Mammary epithelial cell (primary cell): ENCODE measurements at regions of chr10 and their contacts with region 1.

Region 1: GRCh38 chr10:48656241-48656913 is 28.3 kb upstream of the WDFY4 start:
- DNase-seq: peak; percentile 85
- H3K4me3 ChIP-seq: peak overlapping the region; percentile 30 to 70 (median 59)
- H3K27ac ChIP-seq: no peak overlapping the region
- H3K4me1 ChIP-seq: peaks cover 16% of the 10 kb centered on the region
- H3K27me3 ChIP-seq: no peaks in the 10 kb centered on the region
- CTCF ChIP-seq: peak; percentile 85

Region 2: GRCh38 chr10:48363617-48364355 is 292.6 kb before region 1 on chr10:
- CTCF ChIA-PET with region 1: interaction called, 17 read pairs
- dilution Hi-C with region 1: no loop called
- in situ Hi-C with region 1: loop called in 1 of 2 experiments (anchors 5 kb)
- intact Hi-C with region 1: loop called (anchors 1 kb)
- DNase-seq: peak; percentile 60
- H3K4me3 ChIP-seq: no peak overlapping the region
- H3K27ac ChIP-seq: peak overlapping the region; percentile 36
- H3K4me1 ChIP-seq: peaks cover 21% of the 10 kb centered on the region
- H3K27me3 ChIP-seq: no peaks in the 10 kb centered on the region
- CTCF ChIP-seq: peak; percentile 64 to 77

Region 3: DNA sequence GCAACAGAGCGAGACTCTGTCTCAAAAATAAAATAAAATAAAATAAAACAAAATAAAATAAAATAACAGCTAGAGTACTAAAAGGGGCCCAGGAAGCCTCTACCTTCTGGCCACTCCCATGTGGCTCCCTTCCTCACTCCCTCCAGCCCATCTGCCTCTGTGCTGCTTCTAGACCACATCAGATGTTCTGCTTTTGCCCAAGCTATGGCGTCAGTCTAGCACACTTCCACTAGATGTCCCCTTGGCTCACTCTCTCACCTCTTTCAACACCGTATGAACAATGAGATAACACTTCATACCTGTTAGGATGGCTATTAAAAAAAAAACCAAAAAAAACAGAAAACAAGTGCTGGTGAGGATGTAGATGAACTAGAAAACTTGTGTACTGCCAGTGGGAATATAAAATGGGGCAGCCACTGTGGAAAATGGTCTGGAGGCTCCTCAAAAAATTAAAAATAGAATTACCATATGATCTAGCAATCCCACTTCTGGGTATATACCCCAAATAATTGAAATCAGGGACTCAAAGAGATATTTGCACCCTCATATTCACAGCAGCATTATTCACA is 183.8 kb before region 1 on chr10:
- CTCF ChIA-PET with region 1: interaction called, 10 read pairs
- dilution Hi-C with region 1: no loop called
- in situ Hi-C with region 1: no loop called
- intact Hi-C with region 1: no loop called
- DNase-seq: no peak
- H3K4me3 ChIP-seq: no peak overlapping the region
- H3K27ac ChIP-seq: no peak overlapping the region
- H3K4me1 ChIP-seq: peaks cover 45% of the 10 kb centered on the region
- H3K27me3 ChIP-seq: no peaks in the 10 kb centered on the region
- CTCF ChIP-seq: no peak

Region 4: GRCh38 chr10:48589266-48589665 is 67.1 kb before region 1 on chr10:
- CTCF ChIA-PET with region 1: interaction called, 10 read pairs
- dilution Hi-C with region 1: no loop called
- in situ Hi-C with region 1: no loop called
- intact Hi-C with region 1: no loop called
- DNase-seq: peak; percentile 93
- H3K4me3 ChIP-seq: no peak overlapping the region
- H3K27ac ChIP-seq: peak overlapping the region; percentile 80
- H3K4me1 ChIP-seq: peaks cover 32% of the 10 kb centered on the region
- H3K27me3 ChIP-seq: no peaks in the 10 kb centered on the region
- CTCF ChIP-seq: no peak

Region 5: DNA sequence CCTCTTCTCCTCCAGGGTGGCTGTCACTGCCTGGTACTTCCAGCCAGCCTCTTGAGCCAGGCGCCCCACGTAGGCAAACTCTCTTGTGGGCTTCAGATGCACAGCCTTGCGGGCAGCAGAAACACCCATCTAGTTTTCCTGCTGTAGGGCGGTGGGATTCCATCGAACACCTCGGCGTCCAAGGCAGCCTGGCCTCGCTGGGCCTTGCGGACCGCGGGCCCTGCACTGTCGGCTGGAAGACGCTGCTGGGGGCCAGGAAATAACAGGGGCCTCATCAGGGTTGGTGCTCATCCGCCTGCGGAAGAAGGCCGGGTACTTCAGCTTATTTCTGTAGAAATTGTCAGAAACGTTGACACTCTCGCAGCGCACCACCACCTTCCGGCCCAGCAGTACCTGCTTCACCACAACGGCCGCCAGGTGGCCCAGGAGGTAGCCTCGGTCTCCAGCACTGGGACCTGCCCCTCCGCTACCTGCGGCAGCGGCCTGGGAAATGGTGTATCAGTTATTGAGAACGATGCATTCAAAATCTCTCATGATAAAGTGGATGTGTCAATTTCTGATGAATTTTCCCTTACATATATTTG is 89.4 kb after region 1 on chr10:
- CTCF ChIA-PET with region 1: no interaction called
- dilution Hi-C with region 1: no loop called
- in situ Hi-C with region 1: no loop called
- intact Hi-C with region 1: no loop called
- DNase-seq: no peak
- H3K4me3 ChIP-seq: no peak overlapping the region
- H3K27ac ChIP-seq: no peak overlapping the region
- H3K4me1 ChIP-seq: no peaks in the 10 kb centered on the region
- H3K27me3 ChIP-seq: no peaks in the 10 kb centered on the region
- CTCF ChIP-seq: peak; percentile 10 to 29

Region 6: GRCh38 chr10:48780341-48780740 is 124.0 kb after region 1 on chr10:
- CTCF ChIA-PET with region 1: interaction called, 14 read pairs
- dilution Hi-C with region 1: no loop called
- in situ Hi-C with region 1: no loop called
- intact Hi-C with region 1: no loop called
- DNase-seq: no peak
- H3K4me3 ChIP-seq: no peak overlapping the region
- H3K27ac ChIP-seq: no peak overlapping the region
- H3K4me1 ChIP-seq: no peaks in the 10 kb centered on the region
- H3K27me3 ChIP-seq: peaks cover 5% of the 10 kb centered on the region
- CTCF ChIP-seq: no peak

Region 7: DNA sequence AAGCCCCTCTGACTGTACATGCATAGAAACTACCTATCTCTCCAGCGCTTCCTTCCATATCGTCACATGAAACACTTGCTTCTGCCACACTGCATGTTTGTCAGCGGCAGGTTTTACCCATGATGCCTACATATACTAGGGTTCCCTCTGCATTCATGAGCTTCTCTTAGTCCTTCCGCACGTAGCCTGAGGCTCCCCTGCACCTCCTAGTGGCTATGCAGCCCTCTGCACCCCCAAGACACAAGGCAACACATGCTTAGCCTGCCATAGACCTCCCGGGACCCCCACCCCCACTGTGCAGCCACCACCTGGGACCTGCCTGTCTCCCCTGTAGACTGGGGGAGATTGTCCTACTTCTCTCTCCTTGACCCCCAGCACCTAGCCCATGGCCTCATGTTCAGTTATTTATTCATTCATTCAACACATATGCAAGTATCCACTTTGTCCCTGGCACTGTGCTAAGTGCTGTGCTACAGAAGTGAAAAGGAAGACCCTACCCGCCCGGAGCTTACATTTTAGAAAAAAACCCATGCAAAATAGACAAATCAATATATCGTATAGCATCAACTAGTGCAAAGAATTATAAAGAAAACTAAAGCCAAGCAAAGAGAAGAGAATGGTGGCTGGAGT is 508.3 kb after region 1 on chr10:
- CTCF ChIA-PET with region 1: interaction called, 8 read pairs
- dilution Hi-C with region 1: no loop called
- in situ Hi-C with region 1: no loop called
- intact Hi-C with region 1: loop called (anchors 1 kb)
- DNase-seq: peak; percentile 3
- H3K4me3 ChIP-seq: no peak overlapping the region
- H3K27ac ChIP-seq: no peak overlapping the region
- H3K4me1 ChIP-seq: no peaks in the 10 kb centered on the region
- H3K27me3 ChIP-seq: no peaks in the 10 kb centered on the region
- CTCF ChIP-seq: peak; percentile 37 to 63